ENCODE measurements at regions of chr20 and their contacts with region 1.

Region 1: DNA sequence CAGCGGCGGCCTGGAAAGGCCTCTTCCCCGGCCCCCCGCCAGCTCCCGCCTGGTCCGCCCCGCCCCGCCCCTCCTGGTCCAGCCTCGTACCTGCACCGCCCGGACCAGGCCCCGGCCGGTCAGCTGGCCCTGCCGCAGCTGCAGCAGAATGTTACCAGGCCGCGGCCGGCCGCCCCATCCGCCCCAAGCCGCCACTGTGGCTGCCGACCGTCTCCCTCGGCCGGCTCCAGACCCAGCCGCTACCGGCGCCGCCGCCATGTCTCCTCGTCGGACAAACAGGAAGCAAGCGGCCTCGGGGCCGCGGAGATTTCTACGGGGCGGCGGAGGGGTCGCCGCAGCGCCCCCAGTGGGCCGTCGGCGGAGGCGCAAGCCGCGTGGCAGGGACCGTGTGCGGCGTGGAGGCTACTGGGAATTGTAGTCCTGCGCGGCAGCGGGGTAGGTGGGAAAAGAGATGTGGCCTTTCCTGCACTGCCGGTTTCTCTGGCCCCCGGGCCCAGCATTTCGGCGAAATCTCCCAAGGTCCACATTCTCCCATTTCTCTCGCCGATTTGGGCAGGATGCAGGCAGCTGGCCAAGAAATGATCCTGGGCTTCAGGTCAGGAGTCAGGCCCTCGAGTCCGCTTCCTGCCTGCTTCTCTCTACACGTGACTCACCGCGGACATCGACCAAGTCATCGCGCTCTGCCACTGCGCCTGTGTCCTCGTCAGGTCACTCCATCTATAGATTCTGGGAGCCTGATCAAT is at the start of gene TRPC4AP:
- DNase-seq: peak; percentile 88
- H3K4me3 Mint-ChIP-seq: peak within 1 kb of the TSS; percentile 92
- H3K27ac Mint-ChIP-seq: peak within 1 kb of the TSS; percentile 94
- H3K4me1 Mint-ChIP-seq: peaks cover 48% of the 10 kb centered on the region
- H3K27me3 Mint-ChIP-seq: no peaks in the 10 kb centered on the region
- total RNA-seq, gene TRPC4AP: 53.9 and 54.0 TPM in 2 replicates

Region 2: GRCh38 chr20:34904202-34904621 is 188.5 kb before region 1 on chr20:
- intact Hi-C with region 1: no loop called
- DNase-seq: no peak
- H3K4me3 Mint-ChIP-seq: no peak overlapping the region
- H3K27ac Mint-ChIP-seq: peak overlapping the region; percentile 49
- H3K4me1 Mint-ChIP-seq: peaks cover 34% of the 10 kb centered on the region
- H3K27me3 Mint-ChIP-seq: no peaks in the 10 kb centered on the region

Region 3: DNA sequence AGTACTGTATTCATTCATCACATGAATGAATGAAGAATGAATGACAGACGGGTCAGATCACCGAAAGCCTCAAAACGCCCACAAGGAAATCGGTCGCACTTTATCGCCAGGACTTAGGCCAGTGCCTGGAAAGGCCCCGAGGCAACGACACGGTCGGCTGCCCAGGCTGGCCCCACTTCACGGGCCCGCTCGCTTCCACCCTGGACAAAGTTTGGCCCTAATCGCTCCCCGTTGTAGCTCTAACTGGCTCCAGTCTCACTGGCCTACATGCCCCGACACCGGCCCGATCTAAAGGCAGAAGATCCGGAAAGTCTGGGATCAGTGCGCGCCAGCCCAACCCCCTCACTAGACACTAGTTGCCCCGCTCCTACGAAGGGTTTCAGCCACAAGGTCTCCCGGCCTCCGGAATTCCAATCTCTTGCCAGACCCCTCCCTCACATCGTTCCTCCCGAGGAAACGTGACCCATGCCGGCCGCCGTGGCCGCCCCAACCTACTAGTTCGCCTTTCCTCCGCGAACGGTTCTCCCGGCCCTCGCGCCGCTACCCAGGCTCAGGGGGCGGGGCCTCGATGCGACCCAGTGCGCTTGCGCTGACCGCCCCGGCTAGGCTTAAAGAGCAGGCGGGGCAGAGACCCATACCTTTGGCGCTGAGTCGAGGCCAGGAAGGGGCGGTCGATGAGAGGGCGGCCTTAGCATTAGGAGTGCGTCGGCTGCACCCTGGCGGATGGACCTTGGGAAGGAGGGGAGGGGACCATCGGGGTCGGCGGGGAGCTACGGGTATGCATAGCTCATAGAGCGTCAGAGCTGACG is 137.3 kb before region 1 on chr20 and contains the starts of genes GSS and MYH7B:
- intact Hi-C with region 1: loop called (anchors 1 kb)
- DNase-seq: peak; percentile 97
- H3K4me3 Mint-ChIP-seq: peak within 1 kb of the TSS; percentile 94
- H3K27ac Mint-ChIP-seq: peak within 1 kb of the TSS; percentile 95
- H3K4me1 Mint-ChIP-seq: peaks cover 24% of the 10 kb centered on the region
- H3K27me3 Mint-ChIP-seq: peaks cover 3% of the 10 kb centered on the region
- total RNA-seq, gene GSS: 64.1 and 68.0 TPM in 2 replicates
- total RNA-seq, gene MYH7B: 0.20 and 0.44 TPM in 2 replicates

Region 4: GRCh38 chr20:35079472-35080347 is 13.0 kb before region 1 on chr20:
- intact Hi-C with region 1: no loop called
- DNase-seq: no peak
- H3K4me3 Mint-ChIP-seq: no peak overlapping the region
- H3K27ac Mint-ChIP-seq: peak overlapping the region; percentile 53
- H3K4me1 Mint-ChIP-seq: peaks cover 49% of the 10 kb centered on the region
- H3K27me3 Mint-ChIP-seq: no peaks in the 10 kb centered on the region

Region 5: DNA sequence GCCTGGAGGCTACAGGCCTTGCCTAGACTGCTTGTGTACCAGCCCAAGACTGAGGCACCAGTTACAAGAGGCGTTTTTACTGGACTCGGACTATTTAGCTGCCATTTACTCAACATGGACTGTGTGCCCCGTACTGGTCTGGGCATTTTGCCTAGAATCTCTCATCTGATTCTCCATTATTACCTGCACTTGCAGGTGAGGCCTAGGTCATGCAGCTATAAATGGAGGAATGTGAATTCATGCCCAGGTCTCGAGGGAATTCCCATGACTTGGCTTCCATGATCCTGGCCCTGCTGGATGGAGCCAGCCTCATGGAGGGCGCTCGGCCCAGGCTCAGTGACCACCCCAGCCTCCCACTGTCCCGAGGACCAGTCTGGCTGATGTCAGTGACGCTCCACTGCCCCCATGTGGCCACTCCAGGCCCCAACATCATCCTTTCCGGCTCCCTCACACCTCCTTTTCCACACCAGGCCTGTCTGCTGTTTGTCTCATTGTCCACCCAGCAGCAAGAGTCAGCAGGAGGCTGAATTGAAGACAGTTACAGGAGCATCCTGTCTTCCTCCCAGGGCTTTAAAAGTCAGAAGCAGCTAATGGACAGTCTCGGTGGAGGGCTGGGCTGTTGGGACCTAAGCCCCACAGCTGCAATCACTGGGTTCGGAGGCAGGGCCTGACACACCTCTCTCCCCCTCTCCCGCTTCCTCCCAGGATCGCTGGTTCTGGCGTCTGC is 176.5 kb after region 1 on chr20:
- intact Hi-C with region 1: loop called (anchors 1 kb)
- DNase-seq: peak; percentile 36
- H3K4me3 Mint-ChIP-seq: no peak overlapping the region
- H3K27ac Mint-ChIP-seq: no peak overlapping the region
- H3K4me1 Mint-ChIP-seq: no peaks in the 10 kb centered on the region
- H3K27me3 Mint-ChIP-seq: no peaks in the 10 kb centered on the region

Region 6: DNA sequence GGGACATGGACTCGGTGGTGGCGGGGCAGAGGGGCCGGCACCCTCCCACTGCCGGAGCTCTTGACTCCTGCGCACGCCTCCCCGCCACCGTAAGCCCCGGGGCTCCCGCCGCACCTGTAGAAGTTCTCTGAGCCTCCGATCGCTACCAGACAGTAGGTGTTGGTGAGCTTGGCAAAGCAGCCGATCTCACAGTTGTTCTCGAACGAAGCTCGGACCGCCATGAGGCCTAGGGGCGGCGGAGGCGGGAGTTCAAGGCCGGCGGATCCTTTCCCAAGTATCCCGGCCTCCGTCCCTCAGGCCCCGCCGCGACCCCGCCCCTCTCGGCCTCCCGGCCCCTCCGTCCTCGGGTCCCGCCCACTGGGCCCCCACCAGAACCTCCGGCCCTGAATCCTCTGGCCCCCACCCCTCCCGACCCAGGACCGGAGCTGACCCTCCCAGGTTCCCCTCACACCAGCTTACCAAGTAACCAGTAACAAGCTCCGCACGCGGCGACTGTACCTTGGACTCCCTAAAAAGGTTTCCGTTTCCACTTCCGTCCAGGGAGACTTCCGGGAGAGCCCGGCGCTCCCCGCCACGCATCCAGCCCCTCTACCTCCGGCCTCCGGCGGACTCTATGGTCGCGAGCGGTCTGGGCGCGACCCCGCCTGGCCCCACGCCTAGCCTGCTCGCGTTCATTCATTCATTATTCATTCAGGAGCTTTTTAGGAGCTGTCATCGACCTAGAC is 191.7 kb after region 1 on chr20 and contains the start of gene EIF6:
- intact Hi-C with region 1: loop called (anchors 2 kb)
- DNase-seq: peak; percentile 73
- H3K4me3 Mint-ChIP-seq: peak within 1 kb of the TSS; percentile 93
- H3K27ac Mint-ChIP-seq: peak within 1 kb of the TSS; percentile 95
- H3K4me1 Mint-ChIP-seq: peaks cover 28% of the 10 kb centered on the region
- H3K27me3 Mint-ChIP-seq: peaks cover 2% of the 10 kb centered on the region
- total RNA-seq, gene EIF6: 232 TPM in 2 replicates

Region 7: DNA sequence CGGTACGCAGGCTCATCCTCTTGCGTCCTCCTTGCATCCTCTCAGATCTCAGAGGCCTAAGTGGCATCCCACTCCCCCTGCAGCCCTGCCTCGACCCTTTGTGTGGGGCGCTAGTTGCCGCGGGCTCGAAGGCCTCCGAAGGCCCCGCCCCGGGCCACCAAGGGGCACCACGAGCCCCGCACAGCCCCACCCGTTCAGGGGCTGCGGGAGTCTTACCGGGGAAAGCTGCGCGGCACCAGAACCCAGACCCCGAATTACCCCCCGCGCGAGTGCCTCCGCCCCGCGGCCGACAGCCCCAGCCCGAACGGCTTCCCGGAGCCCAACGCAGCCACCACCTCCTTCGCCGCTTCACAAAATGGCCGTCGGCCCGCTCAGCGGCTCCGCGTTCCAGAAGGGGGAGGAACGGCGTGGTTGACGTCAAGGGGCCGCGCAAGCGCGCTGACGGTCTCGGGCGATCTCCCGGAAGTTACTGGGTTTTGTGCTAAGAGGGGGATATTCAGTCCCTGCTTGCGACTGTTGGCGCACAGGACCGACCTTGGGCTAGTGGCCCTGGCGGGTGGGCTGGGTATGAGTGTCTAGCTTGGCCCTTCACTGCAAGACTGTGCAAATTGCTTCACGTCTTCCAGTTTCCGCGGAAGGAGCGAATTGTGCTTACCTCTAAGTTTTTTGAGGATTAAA is 572.0 kb after region 1 on chr20 and contains the starts of genes CPNE1 and RBM12:
- intact Hi-C with region 1: loop called (anchors 2 kb)
- DNase-seq: peak; percentile 91
- H3K4me3 Mint-ChIP-seq: peak within 1 kb of the TSS; percentile 95
- H3K27ac Mint-ChIP-seq: peak within 1 kb of the TSS; percentile 99
- H3K4me1 Mint-ChIP-seq: peaks cover 48% of the 10 kb centered on the region
- H3K27me3 Mint-ChIP-seq: no peaks in the 10 kb centered on the region
- total RNA-seq, gene CPNE1: 304 and 308 TPM in 2 replicates
- total RNA-seq, gene RBM12: 151 and 168 TPM in 2 replicates